Lower leg skin (tissue), 4 donors: ENCODE measurements at regions of chr1 and their contacts with region 1.

Region 1: GRCh38 chr1:63289135-63289534 is 33.2 kb upstream of the FOXD3 start:
- DNase-seq: no peak
- H3K4me3 ChIP-seq: no peak overlapping the region
- CTCF ChIP-seq: no peak
- POLR2A ChIP-seq: no peak

Region 2: GRCh38 chr1:63721531-63722189 is 432.5 kb after region 1 on chr1:
- intact Hi-C with region 1: loop called (anchors 10 kb)
- DNase-seq: no peak
- H3K4me3 ChIP-seq: no peak overlapping the region
- CTCF ChIP-seq: no peak
- POLR2A ChIP-seq: no peak